ENCODE measurements at regions of chr16 and their contacts with region 1.

Region 1: DNA sequence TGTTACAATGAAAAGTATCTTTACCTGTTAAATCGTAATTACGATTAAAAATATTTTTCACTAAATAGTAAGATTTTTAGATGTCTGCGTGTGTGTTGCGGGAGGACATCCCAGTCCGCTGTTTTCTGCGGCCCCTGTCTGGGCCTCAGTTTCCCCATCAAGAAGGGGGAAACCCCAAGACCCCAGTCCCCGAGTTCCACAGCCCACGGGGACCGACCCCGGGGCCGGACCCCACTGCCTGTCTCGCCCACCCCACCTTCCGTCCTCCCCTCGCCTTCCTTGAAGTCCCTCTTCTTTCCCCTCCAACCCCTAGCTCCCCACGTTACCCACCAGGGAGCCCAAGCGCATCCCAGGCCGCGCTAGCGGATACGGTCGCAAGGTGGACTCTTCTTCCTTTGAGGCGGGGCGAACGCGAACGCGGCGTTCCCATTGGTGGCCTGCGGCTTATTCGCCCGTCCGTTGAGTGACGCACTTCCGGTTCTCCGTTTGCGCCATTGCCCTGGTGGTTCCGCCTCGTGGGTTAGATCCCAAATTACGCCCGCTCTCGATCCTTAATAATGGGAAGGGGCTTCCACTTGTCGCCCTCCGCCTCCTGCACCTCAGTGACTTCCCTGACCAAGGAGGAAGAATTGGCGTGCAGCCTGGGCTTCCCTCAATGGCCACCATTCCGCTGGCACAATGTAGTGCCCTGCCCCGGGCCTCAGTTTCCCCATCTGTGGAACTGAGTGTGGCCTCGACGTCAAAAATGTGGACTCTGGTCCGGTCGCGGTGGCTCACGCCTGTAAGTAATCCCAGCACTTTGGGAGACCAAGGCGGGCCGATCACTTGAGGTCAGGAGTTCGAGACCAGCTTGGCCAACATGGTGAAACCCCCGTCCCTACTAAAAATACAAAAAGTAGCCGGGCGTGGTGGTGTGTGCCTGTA is at the start of gene NSMCE1:
- DNase-seq: peak; percentile 97
- ATAC-seq: peak; percentile 97
- H3K4me3 ChIP-seq: peak within 1 kb of the TSS; percentile 88 to 97 (median 94)
- H3K4me3 Mint-ChIP-seq: peak within 1 kb of the TSS; percentile 99
- H3K27ac ChIP-seq: peak within 1 kb of the TSS; percentile 93 to 99
- H3K27ac Mint-ChIP-seq: peak within 1 kb of the TSS; percentile 99
- H3K4me1 ChIP-seq: peaks cover 59 to 63% of the 10 kb centered on the region in 2 donors
- H3K4me1 Mint-ChIP-seq: peaks cover 71% of the 10 kb centered on the region
- H3K27me3 ChIP-seq: no peaks in the 10 kb centered on the region
- H3K27me3 Mint-ChIP-seq: no peaks in the 10 kb centered on the region
- CTCF ChIP-seq: peak; percentile 11
- total RNA-seq, gene NSMCE1: 56.8 and 61.9 TPM in 2 replicates

Region 2: GRCh38 chr16:27203429-27204231 is 65.0 kb before region 1 on chr16 and contains the start of gene KDM8:
- CTCF ChIA-PET with region 1: no interaction called
- POLR2A ChIA-PET with region 1: no interaction called
- intact Hi-C with region 1: loop called (anchors 1 kb)
- DNase-seq: peak; percentile 100
- ATAC-seq: peak; percentile 76
- H3K4me3 ChIP-seq: peak within 1 kb of the TSS; percentile 69 to 95 (median 92)
- H3K4me3 Mint-ChIP-seq: peak within 1 kb of the TSS; percentile 97
- H3K27ac ChIP-seq: peak within 1 kb of the TSS; percentile 93 to 94
- H3K27ac Mint-ChIP-seq: peak within 1 kb of the TSS; percentile 100
- H3K4me1 ChIP-seq: peaks cover 50 to 62% of the 10 kb centered on the region in 2 donors
- H3K4me1 Mint-ChIP-seq: peaks cover 67% of the 10 kb centered on the region
- H3K27me3 ChIP-seq: no peaks in the 10 kb centered on the region
- H3K27me3 Mint-ChIP-seq: no peaks in the 10 kb centered on the region
- CTCF ChIP-seq: no peak
- total RNA-seq, gene KDM8: 37.4 and 39.8 TPM in 2 replicates

Region 3: DNA sequence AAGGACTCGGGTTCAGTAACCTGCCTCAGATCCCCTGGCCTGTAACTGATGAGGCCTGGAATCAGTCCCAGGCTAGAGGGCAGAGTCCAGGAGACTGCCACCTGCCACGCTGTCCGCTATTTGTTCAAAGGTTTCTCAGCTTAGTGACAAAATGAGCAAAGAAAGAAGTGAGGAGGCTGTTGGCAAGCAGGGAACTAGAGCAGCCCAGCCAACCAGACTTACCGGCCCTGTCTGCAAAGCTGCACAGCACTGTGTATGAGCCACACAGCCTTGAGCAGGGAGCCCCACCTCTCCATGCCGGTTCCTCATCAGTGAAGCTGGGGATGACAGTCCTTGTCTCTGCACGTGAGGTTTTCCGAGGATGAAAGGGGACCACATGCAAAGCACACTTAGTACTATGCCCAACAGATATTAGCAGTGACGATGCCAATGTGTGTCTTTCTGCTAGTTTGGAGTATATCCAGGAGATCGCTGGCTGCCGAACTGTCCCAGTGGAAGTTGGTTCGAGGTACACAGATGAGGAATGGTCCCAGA is 54.1 kb before region 1 on chr16:
- CTCF ChIA-PET with region 1: no interaction called
- POLR2A ChIA-PET with region 1: no interaction called
- intact Hi-C with region 1: no loop called
- DNase-seq: no peak
- ATAC-seq: no peak
- H3K4me3 ChIP-seq: no peak overlapping the region
- H3K4me3 Mint-ChIP-seq: no peak overlapping the region
- H3K27ac ChIP-seq: no peak overlapping the region
- H3K27ac Mint-ChIP-seq: no peak overlapping the region
- H3K4me1 ChIP-seq: no peaks in the 10 kb centered on the region
- H3K4me1 Mint-ChIP-seq: no peaks in the 10 kb centered on the region
- H3K27me3 ChIP-seq: no peaks in the 10 kb centered on the region
- H3K27me3 Mint-ChIP-seq: no peaks in the 10 kb centered on the region
- CTCF ChIP-seq: no peak

Region 4: GRCh38 chr16:27253526-27253930 is 15.1 kb before region 1 on chr16:
- CTCF ChIA-PET with region 1: interaction called, 7 read pairs
- POLR2A ChIA-PET with region 1: interaction called, 11 read pairs
- intact Hi-C with region 1: loop called (anchors 1 kb)
- DNase-seq: no peak
- ATAC-seq: no peak
- H3K4me3 ChIP-seq: no peak overlapping the region
- H3K4me3 Mint-ChIP-seq: peak overlapping the region; percentile 57
- H3K27ac ChIP-seq: peak overlapping the region in 1 of 2 donors; percentile 66
- H3K27ac Mint-ChIP-seq: peak overlapping the region; percentile 88
- H3K4me1 ChIP-seq: peaks cover 21 to 27% of the 10 kb centered on the region in 2 donors
- H3K4me1 Mint-ChIP-seq: peaks cover 41% of the 10 kb centered on the region
- H3K27me3 ChIP-seq: no peaks in the 10 kb centered on the region
- H3K27me3 Mint-ChIP-seq: no peaks in the 10 kb centered on the region
- CTCF ChIP-seq: no peak

Region 5: GRCh38 chr16:27318392-27319226 is 50.0 kb after region 1 on chr16:
- CTCF ChIA-PET with region 1: interaction called, 4 read pairs
- POLR2A ChIA-PET with region 1: interaction called, 5 read pairs
- intact Hi-C with region 1: loop called (anchors 2 kb)
- DNase-seq: peak; percentile 39
- ATAC-seq: peak; percentile 52
- H3K4me3 ChIP-seq: peak overlapping the region; percentile 40 to 98 (median 93)
- H3K4me3 Mint-ChIP-seq: peak overlapping the region; percentile 98
- H3K27ac ChIP-seq: peak overlapping the region; percentile 28 to 69
- H3K27ac Mint-ChIP-seq: peak overlapping the region; percentile 88
- H3K4me1 ChIP-seq: peaks cover 68 to 84% of the 10 kb centered on the region in 2 donors
- H3K4me1 Mint-ChIP-seq: peaks cover 80% of the 10 kb centered on the region
- H3K27me3 ChIP-seq: no peaks in the 10 kb centered on the region
- H3K27me3 Mint-ChIP-seq: no peaks in the 10 kb centered on the region
- CTCF ChIP-seq: no peak

Measured in B cell (primary cell).